Activated CD4-positive, alpha-beta T cell treated with anti-CD3 and anti-CD28 coated beads for 36 hours (primary cell): ENCODE measurements at regions of chr16 and their contacts with region 1.

Region 1: GRCh38 chr16:19167710-19168370 is at the start of gene SYT17:
- DNase-seq: peak; percentile 77
- ATAC-seq: peak; percentile 97
- H3K4me3 Mint-ChIP-seq: no peak within 1 kb of the TSS
- H3K27ac Mint-ChIP-seq: no peak within 1 kb of the TSS
- H3K4me1 Mint-ChIP-seq: no peaks in the 10 kb centered on the region
- H3K27me3 Mint-ChIP-seq: peaks cover 18% of the 10 kb centered on the region
- total RNA-seq, gene SYT17: not detected

Region 2: DNA sequence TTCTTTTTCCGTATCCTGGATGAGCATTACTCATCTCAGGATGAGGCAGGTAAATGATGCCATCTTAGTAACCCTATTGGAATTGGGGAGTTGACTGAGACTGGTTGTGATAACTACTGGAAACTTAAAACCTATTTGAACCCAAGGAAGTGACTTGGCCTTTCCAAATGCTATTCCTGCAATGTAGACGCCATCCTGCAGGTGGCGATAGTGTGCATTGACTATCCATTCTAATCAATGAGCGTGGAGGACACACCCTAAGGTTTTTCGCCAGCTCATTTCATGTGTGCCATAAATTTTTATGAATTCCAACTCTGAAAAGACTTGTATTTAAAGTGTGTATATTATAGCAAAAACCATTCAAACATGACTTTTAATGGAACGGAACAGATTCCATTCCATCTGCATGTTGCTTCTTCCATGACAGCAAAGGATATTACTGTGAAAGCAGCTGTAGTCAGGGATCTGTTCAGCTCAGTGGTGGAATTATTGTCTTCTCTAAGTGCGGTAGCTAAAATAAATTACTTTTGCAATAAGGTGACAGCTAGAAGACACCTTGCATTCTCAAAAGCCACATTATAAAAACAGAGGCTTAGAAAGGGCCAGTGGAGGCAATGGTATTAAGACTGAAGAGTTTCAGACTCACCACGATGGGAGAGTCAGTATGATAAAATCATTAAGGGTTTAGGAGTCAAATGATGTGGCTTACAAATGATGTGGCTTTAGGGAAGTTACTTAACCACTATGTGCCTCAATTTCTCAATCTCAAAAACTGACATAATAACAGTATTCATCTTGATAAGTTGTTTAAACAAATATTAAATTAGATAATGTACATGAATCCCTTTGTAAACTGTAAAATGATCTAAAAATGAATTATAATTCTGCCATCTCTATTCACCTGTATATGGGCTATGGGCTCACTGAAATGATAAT is 55.7 kb after region 1 on chr16:
- CTCF ChIA-PET with region 1: no interaction called
- POLR2A ChIA-PET with region 1: no interaction called
- intact Hi-C with region 1: loop called in 1 of 2 experiments (anchors 10 kb)
- DNase-seq: peak; percentile 76
- ATAC-seq: no peak
- H3K4me3 Mint-ChIP-seq: no peak overlapping the region
- H3K27ac Mint-ChIP-seq: no peak overlapping the region
- H3K4me1 Mint-ChIP-seq: no peaks in the 10 kb centered on the region
- H3K27me3 Mint-ChIP-seq: peaks cover 11% of the 10 kb centered on the region